ENCODE measurements at regions of chr2 and their contacts with region 1.

Region 1: GRCh38 chr2:33086400-33087015 is 139.8 kb downstream of the LTBP1 start:
- DNase-seq: no peak
- H3K4me3 ChIP-seq: no peak overlapping the region
- H3K27ac ChIP-seq: no peak overlapping the region
- H3K4me1 ChIP-seq: no peaks in the 10 kb centered on the region
- H3K27me3 ChIP-seq: no peaks in the 10 kb centered on the region
- CTCF ChIP-seq: no peak

Region 2: GRCh38 chr2:32752205-32752604 is 334.3 kb before region 1 on chr2:
- CTCF ChIA-PET with region 1: no interaction called
- dilution Hi-C with region 1: no loop called
- in situ Hi-C with region 1: no loop called
- intact Hi-C with region 1: no loop called
- DNase-seq: no peak
- H3K4me3 ChIP-seq: no peak overlapping the region
- H3K27ac ChIP-seq: no peak overlapping the region
- H3K4me1 ChIP-seq: peaks cover 12% of the 10 kb centered on the region
- H3K27me3 ChIP-seq: no peaks in the 10 kb centered on the region
- CTCF ChIP-seq: no peak

Region 3: DNA sequence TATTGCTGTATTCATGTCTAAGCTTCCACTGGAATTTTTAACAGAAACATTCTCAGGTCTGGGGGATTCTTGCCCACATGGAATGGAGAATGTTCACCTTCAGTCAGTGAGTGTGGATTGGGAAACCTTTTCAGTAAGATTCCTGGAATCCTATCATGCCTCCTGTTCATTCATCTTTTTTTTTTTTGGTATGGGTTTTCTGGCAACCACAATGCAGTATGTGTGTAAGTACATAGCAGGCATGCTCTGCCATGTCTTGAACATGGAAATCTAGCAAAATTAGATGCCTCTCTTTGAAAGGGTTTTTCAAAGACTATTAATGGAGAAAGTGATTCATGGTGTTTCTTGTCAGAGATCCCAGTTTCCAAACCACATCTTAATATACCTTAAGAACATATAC is 36.7 kb after region 1 on chr2:
- CTCF ChIA-PET with region 1: no interaction called
- dilution Hi-C with region 1: loop called (anchors 5 kb)
- in situ Hi-C with region 1: no loop called
- intact Hi-C with region 1: no loop called
- DNase-seq: peak; percentile 86
- H3K4me3 ChIP-seq: no peak overlapping the region
- H3K27ac ChIP-seq: peak overlapping the region; percentile 2
- H3K4me1 ChIP-seq: peaks cover 21% of the 10 kb centered on the region
- H3K27me3 ChIP-seq: no peaks in the 10 kb centered on the region
- CTCF ChIP-seq: no peak

Region 4: DNA sequence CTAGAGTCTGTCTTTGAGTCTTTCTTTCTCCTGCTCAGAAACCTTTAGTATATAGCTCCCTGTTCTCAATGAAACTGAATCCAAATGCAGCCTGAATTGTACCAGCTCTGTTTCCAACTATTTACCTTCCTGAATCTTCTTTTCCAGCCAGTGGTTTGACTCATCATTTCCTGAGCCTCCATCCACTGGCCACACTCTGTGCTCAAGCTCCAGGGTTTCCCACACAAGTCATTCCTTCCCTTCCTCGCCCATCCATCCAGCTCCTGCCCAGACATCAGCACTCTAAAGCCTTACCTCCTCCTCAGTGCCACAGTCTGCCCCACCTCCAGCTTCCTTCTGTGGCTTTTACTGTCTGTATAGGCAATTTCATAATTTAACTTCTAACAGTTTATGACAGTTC is 156.3 kb after region 1 on chr2:
- CTCF ChIA-PET with region 1: no interaction called
- dilution Hi-C with region 1: no loop called
- in situ Hi-C with region 1: no loop called
- intact Hi-C with region 1: no loop called
- DNase-seq: peak; percentile 68
- H3K4me3 ChIP-seq: no peak overlapping the region
- H3K27ac ChIP-seq: no peak overlapping the region
- H3K4me1 ChIP-seq: peaks cover 16% of the 10 kb centered on the region
- H3K27me3 ChIP-seq: no peaks in the 10 kb centered on the region
- CTCF ChIP-seq: no peak

Measured in mammary epithelial cell (primary cell).